PC-9 (cell line): ENCODE measurements at regions of chr1 and their contacts with region 1.

Region 1: DNA sequence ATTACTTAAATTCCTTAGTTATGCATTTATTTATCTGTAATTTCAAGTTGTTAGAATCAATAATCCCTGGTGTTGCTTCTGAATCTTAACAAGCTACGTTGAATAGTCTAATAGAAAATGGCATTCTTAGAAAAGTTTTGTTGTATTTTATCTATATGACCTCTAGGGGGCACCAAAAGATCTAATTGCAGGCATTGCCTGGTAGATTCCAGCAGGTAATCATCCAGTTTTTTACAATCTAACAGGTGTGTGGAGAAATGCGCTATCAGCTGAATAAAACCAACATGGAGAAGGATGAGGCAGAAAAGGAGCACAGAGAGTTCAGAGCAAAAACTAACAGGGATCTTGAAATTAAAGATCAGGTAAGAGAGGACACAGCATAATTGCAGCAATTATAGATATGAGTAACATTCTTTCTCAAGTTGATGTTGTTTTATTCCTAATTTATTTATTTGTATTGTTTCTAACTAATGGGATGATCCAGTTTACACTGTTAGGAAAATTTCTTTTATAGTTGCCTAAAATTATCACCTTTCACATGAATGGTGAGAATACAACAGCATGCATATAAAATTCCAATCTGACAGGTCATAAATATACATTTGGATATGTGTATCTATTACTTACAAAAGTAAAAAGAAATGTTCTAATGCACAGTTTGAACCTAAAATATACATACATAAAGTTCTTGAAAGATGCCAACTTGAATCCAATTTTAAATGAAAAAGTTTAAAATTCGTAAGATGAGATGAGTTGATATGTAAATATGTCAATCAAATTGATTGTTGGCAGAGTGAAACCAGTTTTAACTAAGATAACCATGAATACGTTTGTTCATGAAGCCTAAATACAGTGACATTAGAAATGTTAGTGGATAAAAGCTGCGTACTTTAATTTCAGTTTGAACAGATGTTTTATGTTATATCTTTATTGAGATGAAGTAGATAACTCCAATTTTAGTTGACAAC is 88.4 kb downstream of the SDCCAG8 start:
- DNase-seq: peak in 1 of 2 experiments; percentile 48
- H3K4me3 ChIP-seq: no peak overlapping the region
- H3K27ac ChIP-seq: no peak overlapping the region
- H3K4me1 ChIP-seq: no peaks in the 10 kb centered on the region
- H3K27me3 ChIP-seq: no peaks in the 10 kb centered on the region
- CTCF ChIP-seq: peak; percentile 87

Region 2: DNA sequence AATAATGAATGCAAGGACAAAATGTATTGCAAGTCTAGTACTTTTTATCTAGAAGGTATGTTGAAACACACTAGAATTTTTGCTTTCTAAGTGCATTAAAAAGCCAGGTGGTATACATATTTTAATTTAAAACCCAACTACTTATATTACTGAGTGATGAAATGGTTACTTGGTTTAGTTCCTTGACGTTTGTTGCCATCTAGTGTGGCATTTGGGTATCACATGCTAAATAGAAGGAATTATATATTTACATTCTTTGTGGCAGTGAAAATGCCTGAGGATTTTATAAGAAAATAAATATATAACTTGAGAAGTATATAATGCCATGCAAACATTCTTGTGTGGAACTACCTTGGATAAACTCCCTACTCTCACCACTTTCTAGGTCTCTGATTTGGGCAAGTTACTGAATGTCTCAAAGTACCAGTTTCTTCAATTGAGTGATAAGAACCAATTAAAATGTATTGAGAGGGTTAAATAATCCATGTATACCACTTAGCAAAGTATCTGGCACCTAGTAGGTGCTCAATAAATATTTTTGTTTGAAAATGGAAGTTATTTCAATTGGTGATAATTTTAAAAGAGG is 18.9 kb before region 1 on chr1:
- CTCF ChIA-PET with region 1: no interaction called
- POLR2A ChIA-PET with region 1: no interaction called
- intact Hi-C with region 1: no loop called
- DNase-seq: peak in 1 of 2 experiments; percentile 44
- H3K4me3 ChIP-seq: no peak overlapping the region
- H3K27ac ChIP-seq: no peak overlapping the region
- H3K4me1 ChIP-seq: no peaks in the 10 kb centered on the region
- H3K27me3 ChIP-seq: no peaks in the 10 kb centered on the region
- CTCF ChIP-seq: peak; percentile 91

Region 3: DNA sequence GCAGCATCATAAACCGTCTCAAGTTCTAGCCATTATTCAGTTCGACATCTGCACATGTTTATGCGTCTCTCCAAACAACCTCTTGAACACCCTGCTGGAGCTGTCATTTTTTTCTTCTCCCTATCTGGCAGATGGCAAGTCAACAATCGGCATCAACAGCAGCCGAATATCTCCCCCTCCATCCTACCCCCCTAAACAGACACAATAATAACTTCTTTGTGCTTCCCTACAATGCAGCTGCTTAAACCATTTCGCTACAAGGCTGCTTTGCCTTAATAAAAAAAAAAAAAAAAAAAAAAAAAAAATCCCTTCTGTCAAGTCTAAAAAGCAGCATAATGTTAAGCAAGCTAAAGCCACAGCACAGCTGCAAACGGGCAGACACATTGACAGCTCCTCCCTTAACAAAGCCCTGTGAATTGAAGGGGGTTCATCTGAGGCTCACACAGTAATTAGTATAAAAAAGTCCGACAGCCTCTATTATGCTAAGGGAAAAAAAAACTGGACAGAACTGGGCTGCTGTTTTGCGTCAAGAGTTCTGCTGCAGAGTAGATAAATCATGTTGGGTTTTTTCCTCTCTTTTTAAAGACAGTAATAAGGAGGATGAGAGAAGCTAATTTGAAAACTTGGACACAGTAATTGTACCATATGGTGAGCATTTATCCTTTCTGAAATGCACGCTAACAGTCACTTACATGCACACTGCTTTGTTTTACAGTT is 369.4 kb after region 1 on chr1:
- CTCF ChIA-PET with region 1: no interaction called
- POLR2A ChIA-PET with region 1: no interaction called
- intact Hi-C with region 1: loop called (anchors 10 kb)
- DNase-seq: no peak
- H3K4me3 ChIP-seq: no peak overlapping the region
- H3K27ac ChIP-seq: no peak overlapping the region
- H3K4me1 ChIP-seq: peaks cover 4% of the 10 kb centered on the region
- H3K27me3 ChIP-seq: no peaks in the 10 kb centered on the region
- CTCF ChIP-seq: no peak

Region 4: DNA sequence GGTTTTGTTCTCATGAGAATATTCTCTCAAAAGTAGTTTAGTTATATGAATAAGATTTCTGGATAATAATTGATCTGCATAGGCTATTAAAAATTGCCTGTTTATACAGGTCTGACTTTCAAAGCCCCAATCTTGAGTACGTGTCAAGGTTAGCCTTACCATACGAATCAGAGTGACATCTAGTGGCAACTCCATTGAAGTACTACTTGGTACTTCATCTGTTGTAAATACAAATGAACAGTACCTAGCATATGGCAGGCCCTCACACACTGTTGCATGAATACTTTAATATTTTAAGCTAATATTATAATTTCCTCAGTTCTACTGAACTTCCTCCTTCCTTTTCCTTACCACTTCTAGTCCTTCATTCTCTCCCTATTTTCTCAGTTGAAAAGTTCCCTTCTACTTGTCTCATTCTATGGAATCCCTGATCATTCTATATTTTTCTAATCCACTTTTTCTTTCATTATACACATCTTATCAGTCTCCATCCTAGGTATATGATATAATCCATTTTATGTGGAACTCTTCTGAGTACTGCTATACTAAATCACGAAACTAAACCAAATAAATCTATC is 404.5 kb after region 1 on chr1:
- CTCF ChIA-PET with region 1: interaction called, 3 read pairs
- POLR2A ChIA-PET with region 1: no interaction called
- intact Hi-C with region 1: loop called (anchors 2 kb)
- DNase-seq: peak; percentile 7 to 67
- H3K4me3 ChIP-seq: no peak overlapping the region
- H3K27ac ChIP-seq: peak overlapping the region; percentile 10; the same call in 1 of the 2 replicates
- H3K4me1 ChIP-seq: no peaks in the 10 kb centered on the region
- H3K27me3 ChIP-seq: no peaks in the 10 kb centered on the region
- CTCF ChIP-seq: peak; percentile 83

Region 5: GRCh38 chr1:243946946-243947345 is 602.7 kb after region 1 on chr1:
- CTCF ChIA-PET with region 1: no interaction called
- POLR2A ChIA-PET with region 1: no interaction called
- intact Hi-C with region 1: loop called (anchors 10 kb)
- DNase-seq: no peak
- H3K4me3 ChIP-seq: no peak overlapping the region
- H3K27ac ChIP-seq: no peak overlapping the region
- H3K4me1 ChIP-seq: peaks cover 19% of the 10 kb centered on the region
- H3K27me3 ChIP-seq: no peaks in the 10 kb centered on the region
- CTCF ChIP-seq: peak; percentile 69